ENCODE measurements at regions of chrX and their contacts with region 1.

Region 1: GRCh38 chrX:130916636-130917422 is 13.8 kb upstream of the ENOX2 start:
- DNase-seq: peak; percentile 31
- H3K4me3 Mint-ChIP-seq: no peak overlapping the region
- H3K27ac Mint-ChIP-seq: no peak overlapping the region
- H3K4me1 Mint-ChIP-seq: no peaks in the 10 kb centered on the region
- H3K27me3 Mint-ChIP-seq: peaks cover 1% of the 10 kb centered on the region

Region 2: DNA sequence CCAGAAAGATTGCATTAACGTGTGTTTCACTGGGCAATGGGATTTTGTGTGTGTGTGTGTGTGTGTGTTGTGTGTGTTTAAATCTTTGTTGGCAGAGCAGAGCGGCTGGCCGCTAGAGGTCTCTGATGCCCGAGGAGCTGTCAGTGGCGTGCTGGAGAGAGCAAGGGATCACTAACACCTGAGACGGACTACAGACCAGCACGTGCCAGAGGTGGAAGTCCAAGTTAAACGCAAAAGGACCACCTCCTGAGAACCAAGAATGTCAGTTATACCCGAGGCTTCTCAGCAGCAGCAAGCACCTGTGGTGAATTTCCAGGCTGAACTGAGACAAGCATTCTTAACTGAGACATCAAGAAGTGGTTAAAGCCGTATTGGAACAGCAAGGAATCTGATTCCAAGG is 586.1 kb before region 1 on chrX:
- CTCF ChIA-PET with region 1: interaction called, 6 read pairs
- POLR2A ChIA-PET with region 1: no interaction called
- intact Hi-C with region 1: loop called (anchors 2 kb)
- DNase-seq: peak; percentile 56
- H3K4me3 Mint-ChIP-seq: no peak overlapping the region
- H3K27ac Mint-ChIP-seq: no peak overlapping the region
- H3K4me1 Mint-ChIP-seq: no peaks in the 10 kb centered on the region
- H3K27me3 Mint-ChIP-seq: peaks cover 12% of the 10 kb centered on the region

Region 3: GRCh38 chrX:130539721-130540321 is 377.0 kb before region 1 on chrX:
- CTCF ChIA-PET with region 1: interaction called, 16 read pairs
- POLR2A ChIA-PET with region 1: no interaction called
- intact Hi-C with region 1: loop called (anchors 1 kb)
- DNase-seq: peak; percentile 55
- H3K4me3 Mint-ChIP-seq: no peak overlapping the region
- H3K27ac Mint-ChIP-seq: no peak overlapping the region
- H3K4me1 Mint-ChIP-seq: no peaks in the 10 kb centered on the region
- H3K27me3 Mint-ChIP-seq: peaks cover 6% of the 10 kb centered on the region

Region 4: DNA sequence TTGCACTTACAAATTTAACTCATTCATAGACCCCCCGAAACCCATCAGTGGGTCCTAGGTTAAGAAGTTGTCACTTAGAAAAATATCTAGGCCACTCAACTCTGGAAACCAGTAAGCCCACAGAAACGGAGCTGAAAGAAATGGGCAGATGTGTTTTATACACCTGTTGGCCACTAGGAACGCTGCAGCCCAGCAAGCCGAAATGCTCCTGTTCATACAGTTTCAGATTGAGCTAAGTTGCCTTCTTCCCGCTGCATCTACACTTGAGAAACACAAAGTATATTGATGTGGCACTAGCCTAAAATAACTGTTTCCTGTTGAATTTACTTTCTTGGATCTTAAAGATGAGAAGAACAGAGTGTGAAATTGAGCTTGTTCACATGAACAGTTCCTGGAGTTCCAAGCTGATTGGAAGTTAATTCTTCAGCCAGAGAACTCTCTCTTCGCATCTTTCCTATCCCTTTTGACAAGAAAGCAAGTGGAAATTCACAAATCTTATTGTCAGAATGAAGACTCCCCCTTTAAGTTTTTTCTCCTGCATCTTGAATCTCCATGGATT is 340.9 kb before region 1 on chrX:
- CTCF ChIA-PET with region 1: interaction called, 13 read pairs
- POLR2A ChIA-PET with region 1: no interaction called
- intact Hi-C with region 1: loop called (anchors 5 kb)
- DNase-seq: peak; percentile 37
- H3K4me3 Mint-ChIP-seq: no peak overlapping the region
- H3K27ac Mint-ChIP-seq: no peak overlapping the region
- H3K4me1 Mint-ChIP-seq: no peaks in the 10 kb centered on the region
- H3K27me3 Mint-ChIP-seq: no peaks in the 10 kb centered on the region

Region 5: DNA sequence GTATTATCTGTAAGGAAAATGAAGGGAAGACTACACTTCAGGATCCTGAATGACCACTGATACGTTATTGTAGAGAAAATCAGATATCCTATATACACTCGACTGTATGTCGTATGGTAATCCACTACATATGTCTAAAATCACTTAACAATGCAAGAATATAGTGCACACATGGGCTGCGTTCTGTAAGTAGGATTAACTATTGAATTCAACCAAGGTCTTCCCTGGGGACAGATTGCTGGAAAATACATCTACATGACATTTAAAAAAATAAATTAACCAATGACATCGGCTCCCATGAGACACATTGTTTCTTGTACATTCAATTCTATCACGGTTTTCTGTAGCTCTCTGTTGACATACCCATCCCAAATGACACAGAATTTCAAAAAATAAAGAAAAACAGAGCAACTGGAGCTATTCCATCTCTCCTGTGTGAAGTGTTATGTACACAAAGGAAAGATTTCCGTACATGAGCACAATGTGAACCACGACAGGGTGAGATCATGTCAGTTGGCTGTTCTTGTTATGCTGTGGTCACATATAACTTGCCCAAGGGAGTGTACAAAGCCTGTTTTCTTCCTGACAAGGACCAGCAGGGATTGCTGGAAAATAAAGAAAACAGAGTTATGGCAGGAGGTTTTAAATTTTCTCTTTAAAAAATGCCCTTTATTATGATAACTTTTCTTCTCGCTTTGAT is 19.9 kb before region 1 on chrX:
- CTCF ChIA-PET with region 1: no interaction called
- POLR2A ChIA-PET with region 1: no interaction called
- intact Hi-C with region 1: no loop called
- DNase-seq: no peak
- H3K4me3 Mint-ChIP-seq: no peak overlapping the region
- H3K27ac Mint-ChIP-seq: no peak overlapping the region
- H3K4me1 Mint-ChIP-seq: peaks cover 4% of the 10 kb centered on the region
- H3K27me3 Mint-ChIP-seq: no peaks in the 10 kb centered on the region

Region 6: DNA sequence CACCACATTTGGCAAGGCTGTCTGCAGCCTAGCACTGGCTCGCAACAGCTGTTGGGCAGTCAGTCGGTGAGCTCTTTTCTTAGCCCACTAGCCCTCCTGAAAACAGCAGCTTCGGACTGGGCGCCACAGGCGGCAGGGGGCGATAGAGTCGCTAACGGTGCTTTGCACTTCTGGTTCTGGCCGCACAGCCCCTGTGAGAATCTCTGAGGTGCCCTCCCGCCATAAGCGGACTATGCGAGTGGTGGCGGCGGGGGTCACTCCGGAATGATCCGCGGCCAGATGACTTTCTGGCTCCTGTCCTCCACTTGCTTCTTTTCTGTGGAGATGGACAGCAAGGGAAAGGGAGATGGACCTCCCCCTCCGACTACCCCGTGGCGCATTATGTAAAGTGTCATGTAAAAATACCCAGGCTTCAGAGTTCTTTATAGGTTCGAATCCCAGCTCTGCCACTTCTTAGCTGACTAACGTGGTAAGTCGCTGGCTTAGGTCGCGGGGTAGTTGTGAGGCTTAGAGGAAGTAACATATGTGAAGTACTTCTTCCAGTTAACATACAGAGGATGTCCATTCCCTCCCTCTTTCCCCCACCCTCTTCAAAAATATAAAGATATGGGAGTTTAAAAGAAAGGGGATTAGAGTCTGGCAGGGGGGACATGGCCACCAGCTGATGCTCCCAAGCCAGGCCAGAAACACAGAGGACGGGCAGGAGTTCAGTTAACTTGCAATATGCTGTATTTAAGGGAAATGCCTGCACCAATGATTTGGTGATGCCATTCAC is 152.3 kb after region 1 on chrX:
- CTCF ChIA-PET with region 1: no interaction called
- POLR2A ChIA-PET with region 1: no interaction called
- intact Hi-C with region 1: no loop called
- DNase-seq: peak; percentile 24
- H3K4me3 Mint-ChIP-seq: no peak overlapping the region
- H3K27ac Mint-ChIP-seq: no peak overlapping the region
- H3K4me1 Mint-ChIP-seq: no peaks in the 10 kb centered on the region
- H3K27me3 Mint-ChIP-seq: peaks cover 32% of the 10 kb centered on the region